ENCODE measurements at regions of chr1 and their contacts with region 1.

Region 1: DNA sequence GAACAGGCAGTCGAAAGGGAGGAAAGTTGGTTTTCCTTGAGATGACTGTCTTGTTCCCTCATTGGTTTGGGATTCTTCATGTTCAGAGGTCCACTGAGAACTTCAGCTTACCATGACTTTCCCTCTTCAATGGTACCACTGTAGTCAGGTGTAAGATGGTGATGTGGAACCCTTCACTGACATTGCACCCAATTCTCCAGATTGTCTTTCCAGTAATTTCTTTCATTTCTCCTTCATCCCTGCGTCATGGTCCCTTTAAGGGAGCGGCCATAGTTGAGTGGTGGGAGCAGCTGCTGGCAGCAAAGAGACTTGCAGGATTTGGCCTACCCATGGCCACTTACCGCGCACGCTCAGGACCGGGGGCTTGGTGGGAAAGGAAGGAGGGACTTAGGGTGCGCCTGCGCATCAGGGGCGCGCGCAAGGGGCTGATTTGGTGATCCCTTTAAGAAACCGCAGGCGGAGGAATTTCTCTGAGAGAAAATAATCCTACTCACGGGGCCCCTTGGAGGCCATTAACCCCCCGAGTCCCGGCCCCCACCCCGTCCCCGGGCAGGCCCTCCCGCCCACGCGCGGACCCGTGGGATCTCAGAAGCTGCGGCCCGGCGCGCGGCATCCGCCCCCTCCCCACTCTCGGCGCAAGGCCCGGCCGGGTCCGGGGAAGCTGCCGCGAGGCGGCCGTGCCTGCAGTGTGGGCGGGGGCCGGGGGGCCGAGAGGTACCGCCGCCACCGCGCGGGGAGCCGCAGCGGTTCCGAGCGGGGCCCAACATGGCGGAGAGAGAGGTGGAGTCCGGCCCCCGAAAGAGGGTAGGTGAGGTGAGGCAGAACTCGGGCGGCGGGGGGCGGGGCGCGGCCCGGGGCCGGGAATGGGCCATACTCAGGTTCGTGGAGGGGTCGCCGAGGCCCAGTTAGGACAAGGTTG is at the start of gene ZMYM4:
- DNase-seq: peak; percentile 94
- H3K4me3 Mint-ChIP-seq: peak within 1 kb of the TSS; percentile 73
- H3K27ac Mint-ChIP-seq: peak within 1 kb of the TSS; percentile 91
- H3K4me1 Mint-ChIP-seq: peaks cover 37% of the 10 kb centered on the region
- H3K27me3 Mint-ChIP-seq: no peaks in the 10 kb centered on the region
- CTCF ChIP-seq: no peak
- total RNA-seq, gene ZMYM4: 56.3 and 62.7 TPM in 2 replicates

Region 2: DNA sequence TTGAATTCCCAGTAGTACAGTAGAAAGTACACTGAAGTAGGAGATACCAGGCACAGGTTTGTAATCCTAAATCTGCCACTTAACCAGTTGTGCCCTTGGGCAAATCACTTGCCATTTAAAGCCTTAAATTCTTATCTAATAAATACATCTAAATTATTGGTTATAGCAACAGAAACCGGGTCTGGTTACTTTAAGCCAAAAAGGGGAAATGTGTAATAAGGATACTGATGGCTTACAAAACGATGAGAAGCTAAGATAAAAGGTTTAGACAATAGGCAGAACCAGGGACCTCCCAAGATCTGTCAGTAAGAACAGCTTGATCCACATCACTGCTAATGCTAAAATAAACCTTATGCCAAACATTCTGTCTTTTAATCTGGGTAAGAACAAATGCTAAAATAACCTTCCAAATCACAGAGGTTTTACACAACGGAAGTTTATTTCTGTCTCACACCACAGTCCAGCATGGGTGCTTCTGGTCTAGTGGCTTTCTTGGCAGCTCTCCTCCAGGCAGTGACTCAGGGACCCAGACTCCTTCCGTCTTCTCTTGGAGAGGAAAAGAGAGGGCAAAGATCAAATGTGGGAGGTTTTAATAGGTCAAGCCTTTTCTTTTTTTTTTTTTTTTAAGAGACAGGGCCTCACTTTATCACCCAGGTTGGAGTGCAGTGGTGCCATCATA is 205.9 kb before region 1 on chr1:
- CTCF ChIA-PET with region 1: no interaction called
- intact Hi-C with region 1: no loop called
- DNase-seq: peak; percentile 14
- H3K4me3 Mint-ChIP-seq: no peak overlapping the region
- H3K27ac Mint-ChIP-seq: no peak overlapping the region
- H3K4me1 Mint-ChIP-seq: peaks cover 8% of the 10 kb centered on the region
- H3K27me3 Mint-ChIP-seq: peaks cover 13% of the 10 kb centered on the region
- CTCF ChIP-seq: no peak

Region 3: DNA sequence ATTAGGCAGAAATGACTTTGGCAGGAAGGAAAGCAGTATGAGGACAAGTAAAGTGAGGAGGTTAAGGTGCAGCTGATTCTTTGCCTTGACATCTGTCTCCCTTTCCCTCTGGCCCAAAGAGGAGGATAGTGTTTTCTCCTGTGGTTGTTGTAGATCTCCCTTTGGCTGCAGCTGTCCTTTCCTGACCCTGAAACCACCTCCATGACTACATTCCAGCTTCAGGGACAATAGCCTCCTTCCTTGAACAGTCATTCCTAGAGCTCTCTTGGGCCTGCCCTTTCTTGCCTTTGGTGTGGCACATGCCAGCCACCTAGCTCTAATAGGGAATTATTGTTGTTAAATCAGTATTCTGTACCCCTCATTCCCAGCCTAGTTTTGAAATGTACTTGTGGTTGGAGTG is 183.1 kb before region 1 on chr1:
- CTCF ChIA-PET with region 1: no interaction called
- intact Hi-C with region 1: no loop called
- DNase-seq: no peak
- H3K4me3 Mint-ChIP-seq: no peak overlapping the region
- H3K27ac Mint-ChIP-seq: no peak overlapping the region
- H3K4me1 Mint-ChIP-seq: peaks cover 20% of the 10 kb centered on the region
- H3K27me3 Mint-ChIP-seq: no peaks in the 10 kb centered on the region
- CTCF ChIP-seq: no peak

Region 4: GRCh38 chr1:35192853-35193664 is 75.5 kb before region 1 on chr1 and contains the start of gene SFPQ:
- CTCF ChIA-PET with region 1: no interaction called
- intact Hi-C with region 1: loop called (anchors 5 kb)
- DNase-seq: peak; percentile 96
- H3K4me3 Mint-ChIP-seq: peak within 1 kb of the TSS; percentile 93
- H3K27ac Mint-ChIP-seq: peak within 1 kb of the TSS; percentile 99
- H3K4me1 Mint-ChIP-seq: peaks cover 18% of the 10 kb centered on the region
- H3K27me3 Mint-ChIP-seq: no peaks in the 10 kb centered on the region
- CTCF ChIP-seq: no peak
- total RNA-seq, gene SFPQ: 328 and 369 TPM in 2 replicates

Region 5: GRCh38 chr1:35288761-35289160 is 20.2 kb after region 1 on chr1:
- CTCF ChIA-PET with region 1: no interaction called
- intact Hi-C with region 1: no loop called
- DNase-seq: no peak
- H3K4me3 Mint-ChIP-seq: no peak overlapping the region
- H3K27ac Mint-ChIP-seq: peak overlapping the region; percentile 16
- H3K4me1 Mint-ChIP-seq: peaks cover 29% of the 10 kb centered on the region
- H3K27me3 Mint-ChIP-seq: no peaks in the 10 kb centered on the region
- CTCF ChIP-seq: no peak